Naive thymus-derived CD4-positive, alpha-beta T cell (primary cell): ENCODE measurements at regions of chr14 and their contacts with region 1.

Region 1: GRCh38 chr14:50785457-50786063 is 45.4 kb downstream of the NIN start:
- DNase-seq: peak in 5 of 9 donors; percentile 22 to 50 (median 41)
- ATAC-seq: peak; percentile 60
- H3K4me3 ChIP-seq: peak overlapping the region; percentile 25
- H3K4me3 Mint-ChIP-seq: peak overlapping the region; percentile 50 to 83 (median 71)
- H3K27ac ChIP-seq: peak overlapping the region; percentile 63
- H3K27ac Mint-ChIP-seq: peak overlapping the region; percentile 83 to 98 (median 93)
- H3K4me1 ChIP-seq: peaks cover 60 to 68% of the 10 kb centered on the region in 2 donors
- H3K4me1 Mint-ChIP-seq: peaks cover 40 to 100% (median 88%) of the 10 kb centered on the region in 7 donors
- H3K27me3 ChIP-seq: no peaks in the 10 kb centered on the region
- H3K27me3 Mint-ChIP-seq: no peaks in the 10 kb centered on the region

Region 2: GRCh38 chr14:50667996-50668825 is 117.3 kb before region 1 on chr14 and contains the start of gene SAV1:
- CTCF ChIA-PET with region 1: no interaction called
- POLR2A ChIA-PET with region 1: no interaction called
- intact Hi-C with region 1: loop called in 1 of 2 experiments (anchors 5 kb)
- DNase-seq: peak; percentile 18 to 65 (median 35)
- ATAC-seq: peak; percentile 59
- H3K4me3 ChIP-seq: peak within 1 kb of the TSS; percentile 84
- H3K4me3 Mint-ChIP-seq: peak within 1 kb of the TSS in 2 of 10 donors; percentile 92 to 95
- H3K27ac ChIP-seq: peak within 1 kb of the TSS; percentile 65
- H3K27ac Mint-ChIP-seq: peak within 1 kb of the TSS in 6 of 9 donors; percentile 54 to 94 (median 88)
- H3K4me1 ChIP-seq: peaks cover 0 to 10% of the 10 kb centered on the region in 2 donors
- H3K4me1 Mint-ChIP-seq: peaks cover 11 to 23% (median 20%) of the 10 kb centered on the region in 7 donors
- H3K27me3 ChIP-seq: no peaks in the 10 kb centered on the region
- H3K27me3 Mint-ChIP-seq: peaks cover 0 to 7% (median 0%) of the 10 kb centered on the region in 5 donors
- total RNA-seq, gene SAV1: 7.2 to 9.4 (median 8.7) TPM

Region 3: DNA sequence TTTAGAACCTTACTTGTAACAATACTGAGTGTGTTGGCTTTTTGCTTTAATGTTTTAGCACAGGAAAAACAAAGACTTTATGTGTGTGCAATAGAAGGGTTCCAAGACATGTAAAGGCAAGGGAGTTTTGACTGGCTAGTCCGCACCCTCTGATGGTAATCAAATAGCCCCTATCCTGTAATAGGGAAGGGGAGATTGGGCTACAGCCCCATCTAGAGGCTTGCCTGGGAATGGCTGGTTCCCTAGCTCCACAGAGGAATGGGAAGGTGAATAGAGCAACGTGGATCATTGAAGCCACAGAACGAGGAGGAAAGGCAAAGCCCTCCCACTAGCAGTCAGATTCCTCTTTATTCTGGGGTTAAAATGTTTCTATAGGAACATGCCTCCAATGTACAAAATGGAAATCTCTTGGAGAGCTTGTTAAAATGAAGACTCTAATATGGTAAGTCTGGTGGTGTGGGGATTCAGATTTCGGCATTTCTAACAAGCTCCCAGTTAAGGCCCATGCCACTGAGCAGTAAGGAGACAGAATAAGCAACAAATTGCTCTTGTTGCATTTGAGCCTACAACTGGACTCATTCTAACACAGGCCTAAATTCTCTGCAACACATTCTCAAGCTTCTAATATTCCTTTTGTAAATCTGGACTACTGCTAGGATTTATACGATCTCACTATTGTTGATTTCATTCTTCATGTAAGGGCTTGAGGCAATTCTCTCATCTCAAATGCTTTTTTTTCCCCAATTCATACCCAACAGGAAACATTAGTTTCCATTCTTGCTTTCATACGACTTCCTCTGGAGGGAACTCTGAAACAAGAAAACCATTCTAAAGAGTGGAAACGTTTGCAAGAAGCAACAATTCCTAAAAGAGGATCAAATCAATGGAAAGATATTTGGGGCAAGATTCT is 11.7 kb before region 1 on chr14:
- CTCF ChIA-PET with region 1: interaction called, 28 read pairs
- POLR2A ChIA-PET with region 1: interaction called, 6 read pairs
- intact Hi-C with region 1: no loop called
- DNase-seq: peak in 1 of 9 donors; percentile 38
- ATAC-seq: peak; percentile 65
- H3K4me3 ChIP-seq: no peak overlapping the region
- H3K4me3 Mint-ChIP-seq: peak overlapping the region in 3 of 10 donors; percentile 1 to 27 (median 18)
- H3K27ac ChIP-seq: no peak overlapping the region
- H3K27ac Mint-ChIP-seq: peak overlapping the region in 8 of 9 donors; percentile 1 to 78 (median 37)
- H3K4me1 ChIP-seq: peaks cover 9 to 13% of the 10 kb centered on the region in 2 donors
- H3K4me1 Mint-ChIP-seq: peaks cover 17 to 41% (median 28%) of the 10 kb centered on the region in 7 donors
- H3K27me3 ChIP-seq: no peaks in the 10 kb centered on the region
- H3K27me3 Mint-ChIP-seq: no peaks in the 10 kb centered on the region

Region 4: GRCh38 chr14:50798048-50798421 is 12.5 kb after region 1 on chr14:
- CTCF ChIA-PET with region 1: interaction called, 3 read pairs
- POLR2A ChIA-PET with region 1: interaction called, 20 read pairs
- intact Hi-C with region 1: loop called in 1 of 2 experiments (anchors 1 kb)
- DNase-seq: no peak
- ATAC-seq: no peak
- H3K4me3 ChIP-seq: no peak overlapping the region
- H3K4me3 Mint-ChIP-seq: peak overlapping the region in 2 of 10 donors; percentile 15 to 39
- H3K27ac ChIP-seq: no peak overlapping the region
- H3K27ac Mint-ChIP-seq: peak overlapping the region in 8 of 9 donors; percentile 26 to 98 (median 74)
- H3K4me1 ChIP-seq: peaks cover 19 to 22% of the 10 kb centered on the region in 2 donors
- H3K4me1 Mint-ChIP-seq: peaks cover 19 to 78% (median 64%) of the 10 kb centered on the region in 7 donors
- H3K27me3 ChIP-seq: no peaks in the 10 kb centered on the region
- H3K27me3 Mint-ChIP-seq: no peaks in the 10 kb centered on the region

Region 5: GRCh38 chr14:50804181-50804721 is 18.7 kb after region 1 on chr14:
- CTCF ChIA-PET with region 1: no interaction called
- POLR2A ChIA-PET with region 1: interaction called, 10 read pairs
- intact Hi-C with region 1: loop called in 1 of 2 experiments (anchors 2 kb)
- DNase-seq: no peak
- ATAC-seq: no peak
- H3K4me3 ChIP-seq: no peak overlapping the region
- H3K4me3 Mint-ChIP-seq: peak overlapping the region in 2 of 10 donors; percentile 25 to 27
- H3K27ac ChIP-seq: no peak overlapping the region
- H3K27ac Mint-ChIP-seq: peak overlapping the region in 7 of 9 donors; percentile 38 to 80 (median 65)
- H3K4me1 ChIP-seq: peaks cover 0 to 5% of the 10 kb centered on the region in 2 donors
- H3K4me1 Mint-ChIP-seq: peaks cover 6 to 77% (median 64%) of the 10 kb centered on the region in 7 donors
- H3K27me3 ChIP-seq: no peaks in the 10 kb centered on the region
- H3K27me3 Mint-ChIP-seq: no peaks in the 10 kb centered on the region

Region 6: GRCh38 chr14:50813544-50813863 is 27.9 kb after region 1 on chr14:
- CTCF ChIA-PET with region 1: no interaction called
- POLR2A ChIA-PET with region 1: interaction called, 24 read pairs
- intact Hi-C with region 1: no loop called
- DNase-seq: peak in 7 of 9 donors; percentile 61 to 80 (median 75)
- ATAC-seq: peak; percentile 92
- H3K4me3 ChIP-seq: peak overlapping the region; percentile 38
- H3K4me3 Mint-ChIP-seq: peak overlapping the region; percentile 71 to 91 (median 86)
- H3K27ac ChIP-seq: peak overlapping the region; percentile 54
- H3K27ac Mint-ChIP-seq: peak overlapping the region; percentile 85 to 95 (median 93)
- H3K4me1 ChIP-seq: peaks cover 19 to 37% of the 10 kb centered on the region in 2 donors
- H3K4me1 Mint-ChIP-seq: peaks cover 42 to 81% (median 64%) of the 10 kb centered on the region in 7 donors
- H3K27me3 ChIP-seq: no peaks in the 10 kb centered on the region
- H3K27me3 Mint-ChIP-seq: no peaks in the 10 kb centered on the region

Region 7: DNA sequence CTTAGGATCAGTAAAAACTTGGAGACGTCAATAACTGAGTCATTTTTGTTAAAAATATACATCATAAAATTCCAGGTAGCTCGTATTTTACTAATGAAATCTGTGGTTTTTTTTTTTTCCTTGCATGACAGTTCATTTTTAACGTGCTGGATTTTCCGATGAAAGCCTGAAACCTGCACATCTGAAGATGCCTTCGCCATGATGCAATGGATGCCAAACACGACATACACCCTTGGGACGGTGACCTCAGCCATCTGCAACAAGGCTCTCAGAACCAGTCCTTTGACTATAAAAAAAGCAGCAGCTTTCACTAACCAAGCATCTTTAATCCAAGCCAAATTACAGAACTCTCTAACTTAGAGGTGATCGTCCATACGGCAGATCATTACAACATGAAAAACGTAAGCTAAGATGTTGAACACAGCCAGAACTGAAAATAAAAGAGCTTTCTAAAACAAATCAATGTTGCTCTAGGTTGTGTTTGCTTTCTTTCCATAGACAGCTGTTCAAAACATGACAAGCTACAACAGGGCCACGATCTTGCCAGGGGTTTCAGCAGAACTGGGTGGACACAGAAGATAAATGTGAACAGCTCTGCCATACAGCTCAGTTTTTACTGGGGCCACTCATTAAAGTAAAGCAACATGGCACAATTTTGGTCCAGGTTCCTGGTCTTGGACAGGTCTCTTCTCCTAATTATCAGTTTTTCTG is 37.6 kb after region 1 on chr14:
- CTCF ChIA-PET with region 1: interaction called, 10 read pairs
- POLR2A ChIA-PET with region 1: interaction called, 47 read pairs
- intact Hi-C with region 1: loop called in 1 of 2 experiments (anchors 5 kb)
- DNase-seq: peak in 4 of 9 donors; percentile 13 to 26 (median 20)
- ATAC-seq: peak; percentile 14
- H3K4me3 ChIP-seq: peak overlapping the region; percentile 48
- H3K4me3 Mint-ChIP-seq: peak overlapping the region; percentile 51 to 85 (median 80)
- H3K27ac ChIP-seq: peak overlapping the region; percentile 69
- H3K27ac Mint-ChIP-seq: peak overlapping the region; percentile 89 to 97 (median 92)
- H3K4me1 ChIP-seq: peaks cover 85 to 87% of the 10 kb centered on the region in 2 donors
- H3K4me1 Mint-ChIP-seq: peaks cover 74 to 97% (median 92%) of the 10 kb centered on the region in 7 donors
- H3K27me3 ChIP-seq: no peaks in the 10 kb centered on the region
- H3K27me3 Mint-ChIP-seq: no peaks in the 10 kb centered on the region